GM12878 (cell line): ENCODE measurements at regions of chr2 and their contacts with region 1.

Region 1: GRCh38 chr2:134275058-134275862 is 21.4 kb downstream of the MGAT5 start:
- DNase-seq: peak; percentile 95
- ATAC-seq: peak; percentile 89
- H3K4me3 ChIP-seq: peak overlapping the region; percentile 31; the same call in 1 of the 2 replicates
- H3K27ac ChIP-seq: peak overlapping the region; percentile 88
- H3K4me1 ChIP-seq: peaks cover 91% of the 10 kb centered on the region
- H3K27me3 ChIP-seq: no peaks in the 10 kb centered on the region
- CTCF ChIP-seq: no peak
- EP300 ChIP-seq: peak; percentile 94 to 97
- POLR2A ChIP-seq: no peak
- RAD21 ChIP-seq: no peak; the same call in 1 of the 2 replicates

Region 2: GRCh38 chr2:134253804-134254203 is 21.5 kb before region 1 on chr2 and contains the start of gene MGAT5:
- CTCF ChIA-PET with region 1: interaction called, 6 read pairs
- POLR2A ChIA-PET with region 1: interaction called, 9 read pairs
- RAD21 ChIA-PET with region 1: interaction called, 7 read pairs
- SMC1A ChIA-PET with region 1: interaction called, 27 read pairs
- in situ Hi-C with region 1: no loop called
- intact Hi-C with region 1: loop called (anchors 2 kb)
- DNase-seq: no peak
- ATAC-seq: peak; percentile 8
- H3K4me3 ChIP-seq: peak within 1 kb of the TSS; percentile 21; the same call in 1 of the 2 replicates
- H3K27ac ChIP-seq: peak within 1 kb of the TSS; percentile 67
- H3K4me1 ChIP-seq: peaks cover 82% of the 10 kb centered on the region
- H3K27me3 ChIP-seq: no peaks in the 10 kb centered on the region
- CTCF ChIP-seq: no peak
- EP300 ChIP-seq: no peak
- POLR2A ChIP-seq: no peak
- RAD21 ChIP-seq: no peak
- polyA plus RNA-seq, gene MGAT5: 9.1 to 9.8 TPM

Region 3: DNA sequence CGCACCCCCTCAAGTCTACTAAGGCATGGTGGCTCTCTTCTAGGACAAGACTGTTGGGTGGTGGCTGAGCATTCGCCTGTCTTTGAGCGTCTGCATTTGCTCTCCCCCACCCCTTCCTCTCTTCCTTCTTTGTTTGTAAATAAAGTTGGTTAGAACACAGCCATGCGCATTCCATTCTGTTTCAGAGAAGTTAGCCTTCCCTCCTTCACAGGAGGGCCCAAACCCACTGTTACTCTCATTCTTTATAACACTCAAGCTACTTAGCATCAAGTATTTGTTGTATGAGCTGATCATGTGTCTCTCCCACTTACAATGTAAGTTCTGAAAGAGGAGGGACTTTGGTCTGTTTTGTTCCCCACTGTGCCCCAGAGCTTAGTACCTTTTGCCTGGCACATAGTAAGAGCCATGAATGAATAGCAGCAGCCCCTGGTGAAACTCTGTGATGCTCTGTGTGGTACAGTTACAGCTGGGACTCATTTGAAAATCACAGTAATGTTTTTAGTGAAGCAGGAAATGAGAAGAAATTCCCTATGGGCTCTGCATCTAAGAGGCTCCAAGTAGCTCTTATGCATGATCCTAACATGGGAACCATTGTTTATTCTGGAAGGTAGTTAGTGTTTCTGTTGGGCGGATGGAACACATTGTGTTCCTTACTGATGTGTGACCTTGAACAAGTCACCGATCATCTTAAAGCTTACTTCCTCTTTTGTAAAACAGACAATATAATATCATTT is 13.7 kb before region 1 on chr2:
- CTCF ChIA-PET with region 1: interaction called, 25 read pairs
- POLR2A ChIA-PET with region 1: interaction called, 9 read pairs
- RAD21 ChIA-PET with region 1: interaction called, 27 read pairs
- SMC1A ChIA-PET with region 1: interaction called, 33 read pairs
- in situ Hi-C with region 1: no loop called
- intact Hi-C with region 1: loop called (anchors 2 kb)
- DNase-seq: no peak
- ATAC-seq: peak; percentile 78
- H3K4me3 ChIP-seq: no peak overlapping the region
- H3K27ac ChIP-seq: peak overlapping the region; percentile 74
- H3K4me1 ChIP-seq: peaks cover 68% of the 10 kb centered on the region
- H3K27me3 ChIP-seq: no peaks in the 10 kb centered on the region
- CTCF ChIP-seq: no peak
- EP300 ChIP-seq: no peak
- POLR2A ChIP-seq: no peak
- RAD21 ChIP-seq: no peak

Region 4: GRCh38 chr2:134290358-134290757 is 15.1 kb after region 1 on chr2:
- CTCF ChIA-PET with region 1: interaction called, 7 read pairs
- POLR2A ChIA-PET with region 1: interaction called, 8 read pairs
- RAD21 ChIA-PET with region 1: interaction called, 12 read pairs
- SMC1A ChIA-PET with region 1: interaction called, 36 read pairs
- in situ Hi-C with region 1: no loop called
- intact Hi-C with region 1: no loop called
- DNase-seq: peak; percentile 60
- ATAC-seq: peak; percentile 38
- H3K4me3 ChIP-seq: peak overlapping the region; percentile 11; the same call in 1 of the 2 replicates
- H3K27ac ChIP-seq: peak overlapping the region; percentile 82
- H3K4me1 ChIP-seq: peaks cover 94% of the 10 kb centered on the region
- H3K27me3 ChIP-seq: no peaks in the 10 kb centered on the region
- CTCF ChIP-seq: no peak
- EP300 ChIP-seq: peak in 1 of 2 experiments; percentile 22; a peak in 1 of 4 replicates
- POLR2A ChIP-seq: no peak
- RAD21 ChIP-seq: peak; percentile 3; the same call in 1 of the 2 replicates